Activated CD8-positive, alpha-beta T cell treated with anti-CD3 and anti-CD28 coated beads for 36 hours (primary cell): ENCODE measurements at regions of chr16 and their contacts with region 1.

Region 1: DNA sequence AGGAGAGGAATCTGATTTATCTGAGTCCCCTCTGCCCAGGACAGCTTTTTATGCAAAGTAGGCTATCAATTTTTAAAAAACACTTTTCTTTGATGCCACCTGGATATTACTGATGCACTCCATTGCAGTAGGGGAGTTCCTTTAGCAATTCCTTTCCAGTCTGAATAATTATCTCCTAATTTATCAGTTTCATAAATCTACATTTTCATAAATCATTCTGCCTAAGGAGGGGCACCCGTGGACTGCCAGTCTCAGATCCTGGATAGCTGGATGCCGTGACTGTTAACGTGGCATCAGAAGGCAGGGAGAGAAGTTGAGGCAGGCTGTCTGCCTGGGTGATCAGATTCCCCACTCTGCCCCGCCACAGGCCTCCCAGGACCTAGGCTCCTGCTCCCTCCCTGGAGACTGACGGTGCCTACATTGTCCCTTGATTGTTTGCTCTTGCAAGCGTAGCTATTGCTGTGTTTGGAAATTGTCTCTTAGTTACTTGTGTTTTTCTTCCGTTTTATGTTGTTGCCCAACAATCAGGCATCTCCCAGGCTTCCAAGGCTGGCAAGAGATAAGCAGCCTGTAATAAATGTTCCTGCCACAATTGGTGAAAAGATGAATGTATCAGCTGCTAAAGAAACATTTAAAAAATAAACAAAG is 75.2 kb downstream of the KATNIP start:
- DNase-seq: no peak
- ATAC-seq: no peak
- H3K4me3 Mint-ChIP-seq: no peak overlapping the region
- H3K27ac Mint-ChIP-seq: no peak overlapping the region
- H3K4me1 Mint-ChIP-seq: no peaks in the 10 kb centered on the region
- H3K27me3 Mint-ChIP-seq: no peaks in the 10 kb centered on the region
- CTCF ChIP-seq: no peak

Region 2: GRCh38 chr16:27549859-27550581 is 75.2 kb before region 1 on chr16 and contains the starts of genes GTF3C1 and KATNIP:
- CTCF ChIA-PET with region 1: no interaction called
- POLR2A ChIA-PET with region 1: no interaction called
- intact Hi-C with region 1: no loop called
- DNase-seq: peak; percentile 100
- ATAC-seq: peak; percentile 99
- H3K4me3 Mint-ChIP-seq: peak within 1 kb of the TSS; percentile 92
- H3K27ac Mint-ChIP-seq: peak within 1 kb of the TSS; percentile 93
- H3K4me1 Mint-ChIP-seq: peaks cover 32% of the 10 kb centered on the region
- H3K27me3 Mint-ChIP-seq: no peaks in the 10 kb centered on the region
- CTCF ChIP-seq: no peak
- total RNA-seq, gene GTF3C1: 55.9 to 58.6 TPM
- total RNA-seq, gene KATNIP: 9.6 to 11.5 TPM

Region 3: DNA sequence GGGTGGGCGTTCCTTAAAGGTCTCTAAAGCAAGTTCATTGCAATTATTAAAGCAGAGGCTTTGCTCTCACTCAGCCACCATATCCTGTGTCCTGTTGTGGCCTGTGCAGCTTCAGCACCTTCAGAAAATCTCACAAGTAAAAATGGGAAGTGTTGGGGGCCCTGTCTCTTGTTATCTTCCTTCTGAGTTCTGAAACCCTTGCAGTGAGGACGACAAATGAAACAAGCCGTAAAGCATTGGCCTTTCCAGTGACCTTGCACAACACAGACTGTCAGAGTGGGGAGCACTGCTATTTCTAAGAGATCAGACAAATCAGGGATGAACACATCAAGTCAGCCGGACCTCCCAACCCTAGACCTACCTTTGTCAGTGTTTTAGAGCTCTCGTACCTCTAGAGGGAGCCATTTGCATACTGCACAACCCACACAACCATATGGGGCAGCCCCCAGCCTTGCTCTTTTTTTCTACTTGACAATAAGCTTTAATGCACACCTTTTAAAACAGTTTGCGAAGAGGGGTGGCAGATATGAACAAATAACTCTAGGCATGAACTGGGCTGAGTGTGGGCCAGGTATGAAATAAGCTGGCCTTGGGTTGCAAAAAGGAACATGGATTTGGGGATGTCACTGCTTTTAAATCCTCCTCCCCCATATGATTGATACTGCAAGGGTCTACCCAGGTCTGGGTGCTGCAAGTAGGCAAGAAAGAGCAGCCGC is 14.5 kb after region 1 on chr16:
- CTCF ChIA-PET with region 1: interaction called, 15 read pairs
- POLR2A ChIA-PET with region 1: no interaction called
- intact Hi-C with region 1: no loop called
- DNase-seq: peak; percentile 55
- ATAC-seq: peak; percentile 85
- H3K4me3 Mint-ChIP-seq: no peak overlapping the region
- H3K27ac Mint-ChIP-seq: no peak overlapping the region
- H3K4me1 Mint-ChIP-seq: no peaks in the 10 kb centered on the region
- H3K27me3 Mint-ChIP-seq: no peaks in the 10 kb centered on the region
- CTCF ChIP-seq: peak; percentile 65

Region 4: DNA sequence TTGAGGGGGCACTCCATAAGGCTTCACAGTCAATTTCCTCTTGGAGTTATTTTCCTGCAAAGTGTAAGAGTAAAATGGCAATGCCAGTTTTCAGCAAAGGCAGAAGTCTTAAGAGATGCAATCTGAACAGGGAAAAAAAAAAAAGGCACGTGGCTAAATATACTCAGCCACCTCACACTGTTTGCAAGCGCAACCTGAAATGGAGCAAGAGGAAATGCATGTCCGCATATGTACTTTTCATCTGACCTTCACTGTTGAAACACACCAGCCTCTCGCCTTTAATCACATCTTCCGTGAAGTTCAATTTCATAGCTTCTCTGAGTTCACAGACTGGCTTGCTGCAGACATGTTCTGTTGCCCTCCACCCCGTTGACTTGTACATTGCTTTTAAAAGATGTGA is 26.1 kb after region 1 on chr16:
- CTCF ChIA-PET with region 1: no interaction called
- POLR2A ChIA-PET with region 1: no interaction called
- intact Hi-C with region 1: no loop called
- DNase-seq: no peak
- ATAC-seq: no peak
- H3K4me3 Mint-ChIP-seq: no peak overlapping the region
- H3K27ac Mint-ChIP-seq: no peak overlapping the region
- H3K4me1 Mint-ChIP-seq: no peaks in the 10 kb centered on the region
- H3K27me3 Mint-ChIP-seq: no peaks in the 10 kb centered on the region
- CTCF ChIP-seq: no peak